ENCODE measurements at regions of chrX and their contacts with region 1.

Region 1: DNA sequence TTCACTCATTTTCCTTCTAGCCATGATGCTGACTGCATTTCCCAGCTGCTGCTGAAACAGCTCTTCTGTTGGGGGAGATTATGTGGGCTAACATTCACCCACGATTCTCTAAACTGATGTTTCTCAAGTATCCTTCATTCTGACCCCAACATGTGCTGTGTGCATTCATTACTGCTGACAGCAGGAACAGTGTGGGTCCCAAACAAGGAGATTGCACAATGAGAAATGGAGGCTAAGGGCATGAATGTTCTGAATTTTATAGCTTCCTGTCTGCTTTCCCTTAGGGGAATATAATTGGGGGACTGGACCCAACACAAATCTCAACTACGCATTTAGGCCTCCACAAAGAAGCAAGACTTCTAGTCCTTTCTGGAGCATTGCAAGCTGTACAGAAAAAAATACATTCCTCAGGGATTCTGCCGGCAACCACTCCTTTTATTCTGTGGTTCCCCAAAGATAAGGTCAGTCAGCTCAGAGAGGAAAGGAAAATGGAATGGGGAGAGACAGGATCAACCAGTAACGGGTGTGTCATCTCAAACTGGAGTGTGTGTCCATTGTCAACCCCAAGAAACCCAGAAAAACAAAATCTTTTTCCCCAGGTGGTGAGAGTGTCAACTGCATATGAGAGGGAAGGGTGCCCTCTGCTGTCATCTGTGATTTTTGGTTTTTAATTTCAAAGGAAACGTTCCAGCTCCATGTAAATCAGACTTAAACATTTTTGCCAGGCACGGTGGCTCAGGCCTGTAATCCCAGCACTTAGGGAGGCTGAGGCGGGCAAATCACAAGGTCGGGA is 81.5 kb upstream of the EGFL6 start:
- DNase-seq: peak; percentile 56
- ATAC-seq: peak; percentile 82
- H3K4me3 ChIP-seq: no peak overlapping the region
- H3K27ac ChIP-seq: no peak overlapping the region
- H3K4me1 ChIP-seq: peaks cover 3 to 26% of the 10 kb centered on the region in 2 experiments; a peak in 3 of 4 replicates
- H3K27me3 ChIP-seq: no peaks in the 10 kb centered on the region
- CTCF ChIP-seq: peak; percentile 37 to 87 (median 49); a peak in 4 of 6 replicates
- POLR2A ChIP-seq: no peak
- RAD21 ChIP-seq: peak; percentile 91

Region 2: GRCh38 chrX:12901486-12901885 is 586.4 kb before region 1 on chrX:
- CTCF ChIA-PET with region 1: no interaction called
- POLR2A ChIA-PET with region 1: no interaction called
- RAD21 ChIA-PET with region 1: interaction called in 1 of 2 experiments, 3 read pairs
- intact Hi-C with region 1: loop called (anchors 1 kb)
- DNase-seq: peak; percentile 36
- ATAC-seq: peak; percentile 83
- H3K4me3 ChIP-seq: no peak overlapping the region
- H3K27ac ChIP-seq: no peak overlapping the region
- H3K4me1 ChIP-seq: no peaks in the 10 kb centered on the region
- H3K27me3 ChIP-seq: no peaks in the 10 kb centered on the region
- CTCF ChIP-seq: peak; percentile 39 to 49 (median 44); a peak in 4 of 6 replicates
- POLR2A ChIP-seq: no peak
- RAD21 ChIP-seq: peak; percentile 57

Region 3: DNA sequence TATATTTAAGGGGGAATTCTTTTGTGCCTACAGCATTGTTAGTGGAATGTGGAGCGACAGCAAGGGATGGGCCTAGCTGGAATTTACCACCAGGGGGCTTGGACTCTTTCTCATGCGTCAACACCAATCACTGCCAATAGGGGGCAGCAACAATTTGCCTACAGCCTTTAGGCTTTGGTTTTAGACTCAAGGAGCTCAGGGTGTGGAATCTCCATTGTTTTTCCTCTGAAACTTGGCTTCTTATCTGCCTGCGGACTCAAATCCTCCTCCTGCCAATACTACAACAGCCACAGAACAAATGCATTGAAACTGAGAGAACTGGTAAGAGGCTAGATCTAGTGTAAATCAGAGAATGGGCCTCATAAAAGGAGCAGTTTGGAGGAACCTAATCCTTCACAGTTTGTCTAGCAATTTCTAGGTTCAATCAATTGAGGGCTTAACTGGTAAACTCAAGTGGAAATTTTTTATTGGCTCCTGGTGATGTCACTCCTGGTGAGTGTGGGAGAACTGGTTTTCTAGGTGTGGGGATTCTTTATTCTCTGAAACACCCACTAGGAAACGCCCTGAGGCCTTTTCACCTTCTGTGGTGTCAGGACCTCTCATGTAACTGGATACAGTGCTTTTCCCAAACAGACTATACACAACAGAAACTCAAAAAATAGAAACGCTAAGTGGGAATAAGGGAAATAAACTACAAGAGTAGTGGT is 540.9 kb before region 1 on chrX:
- CTCF ChIA-PET with region 1: interaction called, 42 read pairs
- POLR2A ChIA-PET with region 1: interaction called, 7 read pairs
- RAD21 ChIA-PET with region 1: interaction called, 8 to 9 read pairs
- intact Hi-C with region 1: loop called (anchors 1 kb)
- DNase-seq: peak; percentile 60
- ATAC-seq: peak; percentile 78
- H3K4me3 ChIP-seq: no peak overlapping the region
- H3K27ac ChIP-seq: peak overlapping the region; percentile 37
- H3K4me1 ChIP-seq: peaks cover 9 to 11% of the 10 kb centered on the region in 2 experiments; a peak in 3 of 4 replicates
- H3K27me3 ChIP-seq: no peaks in the 10 kb centered on the region
- CTCF ChIP-seq: peak; percentile 90 to 99 (median 94)
- POLR2A ChIP-seq: no peak
- RAD21 ChIP-seq: peak; percentile 87

Region 4: GRCh38 chrX:12974796-12975669 is 512.9 kb before region 1 on chrX and contains the start of gene TMSB4X:
- CTCF ChIA-PET with region 1: no interaction called
- POLR2A ChIA-PET with region 1: interaction called, 4 read pairs
- RAD21 ChIA-PET with region 1: no interaction called
- intact Hi-C with region 1: loop called (anchors 10 kb)
- DNase-seq: no peak
- ATAC-seq: peak; percentile 91
- H3K4me3 ChIP-seq: peak within 1 kb of the TSS; percentile 57 to 79
- H3K27ac ChIP-seq: peak within 1 kb of the TSS; percentile 71
- H3K4me1 ChIP-seq: peaks cover 0 to 10% of the 10 kb centered on the region in 2 experiments; a peak in 2 of 4 replicates
- H3K27me3 ChIP-seq: no peaks in the 10 kb centered on the region
- CTCF ChIP-seq: no peak
- POLR2A ChIP-seq: peak; percentile 96
- RAD21 ChIP-seq: no peak; the same call in 1 of the 2 replicates
- total RNA-seq, gene TMSB4X: 407 TPM

Measured in HCT116 (cell line).